Colonic mucosa (tissue), 4 donors: ENCODE measurements at regions of chr15 and their contacts with region 1.

Region 1: DNA sequence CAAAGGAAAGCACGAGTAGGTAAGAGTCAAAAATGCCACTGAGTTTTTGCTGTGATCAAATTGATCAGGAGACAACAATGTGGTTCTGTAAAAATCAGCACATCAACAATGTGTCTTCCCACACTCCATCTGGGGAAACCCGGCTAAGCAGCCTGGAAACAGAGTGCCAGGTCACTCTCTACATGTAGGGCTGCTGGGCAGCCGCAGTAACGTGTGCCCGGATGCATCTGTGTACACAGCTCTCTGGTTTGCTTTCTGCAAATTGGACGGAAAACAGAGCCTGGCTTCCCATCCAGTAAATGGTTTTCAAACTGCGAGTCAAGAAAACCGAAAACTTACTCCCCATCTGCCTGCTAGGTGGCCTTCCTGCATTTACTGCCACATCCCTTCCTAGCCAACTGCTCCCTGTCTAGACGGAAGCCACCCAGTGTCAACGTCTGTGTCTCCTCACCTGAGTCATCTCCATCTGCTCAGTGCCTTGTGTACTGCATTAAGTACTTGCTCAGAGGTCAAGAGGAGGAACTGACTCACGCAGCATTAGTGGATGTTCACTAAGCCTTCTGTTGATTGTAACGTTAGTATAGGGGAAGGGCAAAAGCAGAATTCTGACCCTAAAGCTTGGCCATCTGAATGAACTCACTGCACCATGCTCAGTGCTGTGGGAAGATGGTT is 124.1 kb downstream of the TJP1 start:
- DNase-seq: no peak
- H3K4me3 ChIP-seq: no peak overlapping the region
- H3K27ac ChIP-seq: no peak overlapping the region
- H3K4me1 ChIP-seq: no peaks in the 10 kb centered on the region
- H3K27me3 ChIP-seq: no peaks in the 10 kb centered on the region
- CTCF ChIP-seq: no peak

Region 2: GRCh38 chr15:29205186-29205585 is 493.0 kb before region 1 on chr15:
- intact Hi-C with region 1: no loop called
- DNase-seq: no peak
- H3K4me3 ChIP-seq: no peak overlapping the region
- H3K27ac ChIP-seq: no peak overlapping the region
- H3K4me1 ChIP-seq: no peaks in the 10 kb centered on the region
- H3K27me3 ChIP-seq: no peaks in the 10 kb centered on the region
- CTCF ChIP-seq: no peak

Region 3: DNA sequence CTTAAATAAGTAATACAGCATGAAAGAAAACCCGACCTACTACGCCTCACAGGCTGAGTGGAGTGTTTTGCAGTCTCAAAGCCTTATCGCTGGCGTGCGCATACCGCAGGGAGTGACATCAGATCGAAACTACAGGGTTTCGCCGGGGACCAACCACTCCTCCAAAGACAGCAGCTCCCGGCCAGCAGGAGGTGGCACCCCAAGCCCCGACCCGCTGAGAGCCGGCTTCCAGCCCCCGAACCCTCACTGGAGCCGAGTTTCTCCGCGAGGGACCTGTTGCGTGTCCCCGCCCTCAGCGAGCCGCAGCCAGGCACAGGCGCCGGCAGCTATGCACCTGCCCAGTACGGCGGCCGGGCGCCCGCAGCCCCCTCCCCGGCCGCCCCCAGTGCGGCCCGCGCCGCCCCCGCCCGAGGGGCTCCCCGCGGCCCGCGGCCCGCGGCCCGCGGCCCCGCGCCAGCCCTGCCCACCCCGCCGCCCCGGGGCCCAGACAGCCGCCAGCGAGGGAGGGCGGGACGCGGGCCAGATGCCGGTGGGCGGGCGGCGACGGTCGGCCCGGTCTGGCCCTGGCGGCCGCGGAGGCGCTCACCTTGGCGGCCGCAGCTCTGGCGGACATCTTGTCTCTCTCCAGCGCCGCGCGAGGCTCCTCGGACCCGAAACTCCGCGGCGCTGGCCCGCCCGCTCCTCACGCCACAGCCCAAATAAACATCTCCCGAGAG is 123.4 kb after region 1 on chr15:
- intact Hi-C with region 1: loop called (anchors 10 kb)
- DNase-seq: peak; percentile 80
- H3K4me3 ChIP-seq: peak overlapping the region; percentile 65
- H3K27ac ChIP-seq: peak overlapping the region; percentile 90
- H3K4me1 ChIP-seq: peaks cover 5% of the 10 kb centered on the region
- H3K27me3 ChIP-seq: no peaks in the 10 kb centered on the region
- CTCF ChIP-seq: no peak